PC-3 (cell line): ENCODE measurements at regions of chr13 and their contacts with region 1.

Region 1: DNA sequence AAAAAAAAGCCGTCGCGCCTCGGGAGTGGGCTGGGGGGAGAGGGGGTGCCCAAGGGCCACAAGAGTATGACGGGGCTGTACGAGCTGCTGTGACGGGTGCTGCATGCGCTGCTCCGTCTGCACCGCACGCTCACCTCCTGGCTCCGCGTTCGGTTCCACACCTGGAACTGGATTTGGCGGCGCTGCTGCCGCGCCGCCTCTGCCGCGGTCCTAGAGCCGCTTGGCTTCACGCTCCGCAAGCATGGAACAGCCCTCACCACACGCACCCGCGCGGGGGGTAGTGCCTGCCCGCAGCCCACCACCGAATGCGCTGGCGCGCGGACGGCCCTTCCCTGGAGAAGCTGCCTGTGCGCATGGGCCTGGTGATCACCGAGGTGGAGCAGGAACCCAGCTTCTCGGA is 18.8 kb downstream of the C1QTNF9 start:
- DNase-seq: no peak
- ATAC-seq: no peak
- H3K4me3 ChIP-seq: no peak overlapping the region
- H3K27ac ChIP-seq: no peak overlapping the region
- H3K4me1 ChIP-seq: no peaks in the 10 kb centered on the region
- H3K27me3 ChIP-seq: no peaks in the 10 kb centered on the region
- CTCF ChIP-seq: no peak

Region 2: GRCh38 chr13:24407844-24408243 is 79.7 kb after region 1 on chr13:
- CTCF ChIA-PET with region 1: no interaction called
- POLR2A ChIA-PET with region 1: no interaction called
- intact Hi-C with region 1: loop called (anchors 5 kb)
- DNase-seq: peak; percentile 17
- ATAC-seq: no peak
- H3K4me3 ChIP-seq: no peak overlapping the region
- H3K27ac ChIP-seq: no peak overlapping the region
- H3K4me1 ChIP-seq: no peaks in the 10 kb centered on the region
- H3K27me3 ChIP-seq: peaks cover 8% of the 10 kb centered on the region
- CTCF ChIP-seq: peak; percentile 45; the same call in 1 of the 2 replicates

Region 3: DNA sequence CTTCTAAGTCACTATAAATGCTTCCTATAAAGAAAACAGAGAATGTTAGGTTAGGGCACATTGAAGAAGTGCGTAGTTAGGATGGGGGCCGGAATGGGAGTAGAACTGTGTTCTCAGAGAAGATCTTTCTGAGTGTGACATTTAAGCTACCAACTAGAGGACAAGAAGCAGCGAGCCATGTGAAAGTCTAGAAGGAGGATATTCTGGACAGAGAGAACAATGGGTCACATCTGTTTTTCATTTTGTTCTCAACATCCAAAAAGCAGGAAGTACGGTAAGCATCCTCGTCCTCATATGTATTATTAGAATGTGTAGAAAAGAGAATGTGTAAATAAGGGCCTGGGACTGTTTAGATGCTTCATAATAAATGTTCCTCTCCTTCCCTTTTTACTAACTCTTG is 228.9 kb after region 1 on chr13:
- CTCF ChIA-PET with region 1: no interaction called
- POLR2A ChIA-PET with region 1: no interaction called
- intact Hi-C with region 1: loop called (anchors 10 kb)
- DNase-seq: no peak
- ATAC-seq: no peak
- H3K4me3 ChIP-seq: no peak overlapping the region
- H3K27ac ChIP-seq: no peak overlapping the region
- H3K4me1 ChIP-seq: no peaks in the 10 kb centered on the region
- H3K27me3 ChIP-seq: peaks cover 25% of the 10 kb centered on the region
- CTCF ChIP-seq: no peak